ENCODE measurements at regions of chr6 and their contacts with region 1.

Region 1: DNA sequence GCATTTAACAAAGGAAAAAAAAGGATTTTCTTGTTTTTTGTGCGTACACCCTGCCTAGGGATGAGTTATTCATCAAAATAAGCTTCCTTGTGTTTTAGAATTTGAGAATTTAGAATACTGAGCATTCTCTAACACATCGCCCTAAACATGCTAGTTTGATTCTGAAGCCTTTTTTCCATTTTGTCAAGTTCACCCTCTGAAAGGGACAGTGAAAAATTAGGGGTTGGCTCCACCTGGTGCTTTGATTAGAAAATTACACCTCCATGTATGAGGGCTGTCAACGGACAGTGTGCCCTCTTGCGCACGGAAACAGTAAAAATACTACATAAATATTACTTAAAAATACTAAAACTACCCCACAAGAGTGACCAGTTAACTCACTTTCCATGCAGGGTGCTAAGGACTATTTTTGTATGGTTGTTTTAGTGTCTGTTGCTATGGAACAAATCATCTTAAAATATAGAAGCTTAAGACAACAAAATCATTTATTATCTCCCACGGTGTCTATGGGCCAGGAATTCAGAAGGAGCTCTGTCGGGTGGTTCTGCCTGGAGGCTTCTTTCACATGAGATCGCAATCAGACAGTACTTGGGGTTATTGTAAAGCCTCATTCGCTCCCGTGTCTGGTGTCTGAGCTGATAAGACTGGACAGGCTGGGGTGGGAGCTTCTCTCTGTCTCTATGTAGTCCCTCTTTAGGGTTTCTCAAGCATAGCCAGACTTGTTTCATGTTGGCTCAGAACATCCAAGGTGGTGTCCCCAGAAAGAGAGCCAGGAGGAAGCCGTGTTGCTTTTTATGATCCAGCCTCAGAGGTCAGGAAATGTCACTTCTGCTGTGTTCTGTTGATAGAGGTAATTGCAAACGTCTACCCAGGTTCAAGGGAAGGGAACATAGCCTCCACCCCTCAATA is 41.1 kb upstream of the TMEM170B start:
- DNase-seq: peak; percentile 80
- ATAC-seq: peak; percentile 92
- H3K4me3 Mint-ChIP-seq: no peak overlapping the region
- H3K27ac Mint-ChIP-seq: no peak overlapping the region
- H3K4me1 Mint-ChIP-seq: peaks cover 2% of the 10 kb centered on the region
- H3K27me3 Mint-ChIP-seq: no peaks in the 10 kb centered on the region

Region 2: DNA sequence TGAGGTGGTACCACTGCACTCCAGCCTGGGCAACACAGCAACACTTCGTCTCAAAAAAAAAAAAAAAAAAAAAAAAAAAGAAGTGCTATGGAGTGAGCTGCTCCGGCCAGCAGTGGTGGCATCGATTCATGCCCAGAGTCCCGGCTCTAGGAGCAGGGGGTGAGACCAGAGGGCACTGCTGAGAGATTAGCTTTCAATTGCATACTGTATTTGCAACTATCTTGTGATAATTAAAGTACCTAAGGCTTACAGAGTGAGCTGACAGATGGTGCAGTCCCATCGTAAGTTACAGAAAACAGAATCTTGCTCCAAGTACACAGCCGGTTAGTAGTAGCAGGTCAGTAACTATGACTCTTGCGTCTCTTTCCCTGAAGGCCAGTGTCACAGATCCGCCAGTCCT is 717.3 kb before region 1 on chr6:
- CTCF ChIA-PET with region 1: no interaction called
- POLR2A ChIA-PET with region 1: no interaction called
- intact Hi-C with region 1: no loop called
- DNase-seq: no peak
- ATAC-seq: no peak
- H3K4me3 Mint-ChIP-seq: no peak overlapping the region
- H3K27ac Mint-ChIP-seq: no peak overlapping the region
- H3K4me1 Mint-ChIP-seq: no peaks in the 10 kb centered on the region
- H3K27me3 Mint-ChIP-seq: no peaks in the 10 kb centered on the region

Region 3: GRCh38 chr6:11093589-11094410 is 402.6 kb before region 1 on chr6 and contains the start of gene SMIM13:
- CTCF ChIA-PET with region 1: interaction called, 4 read pairs
- POLR2A ChIA-PET with region 1: no interaction called
- intact Hi-C with region 1: loop called (anchors 1 kb)
- DNase-seq: peak; percentile 98
- ATAC-seq: peak; percentile 95
- H3K4me3 Mint-ChIP-seq: peak within 1 kb of the TSS; percentile 96
- H3K27ac Mint-ChIP-seq: peak within 1 kb of the TSS; percentile 99
- H3K4me1 Mint-ChIP-seq: peaks cover 25% of the 10 kb centered on the region
- H3K27me3 Mint-ChIP-seq: no peaks in the 10 kb centered on the region
- total RNA-seq, gene SMIM13: 6.3 to 7.9 TPM

Region 4: GRCh38 chr6:11144393-11144851 is 352.0 kb before region 1 on chr6:
- CTCF ChIA-PET with region 1: interaction called, 59 read pairs
- POLR2A ChIA-PET with region 1: no interaction called
- intact Hi-C with region 1: loop called (anchors 1 kb)
- DNase-seq: peak; percentile 89
- ATAC-seq: peak; percentile 94
- H3K4me3 Mint-ChIP-seq: no peak overlapping the region
- H3K27ac Mint-ChIP-seq: no peak overlapping the region
- H3K4me1 Mint-ChIP-seq: peaks cover 7% of the 10 kb centered on the region
- H3K27me3 Mint-ChIP-seq: no peaks in the 10 kb centered on the region

Region 5: GRCh38 chr6:11198663-11199603 is 297.5 kb before region 1 on chr6:
- CTCF ChIA-PET with region 1: interaction called, 10 read pairs
- POLR2A ChIA-PET with region 1: interaction called, 4 read pairs
- intact Hi-C with region 1: no loop called
- DNase-seq: peak; percentile 47
- ATAC-seq: peak; percentile 81
- H3K4me3 Mint-ChIP-seq: no peak overlapping the region
- H3K27ac Mint-ChIP-seq: peak overlapping the region; percentile 74
- H3K4me1 Mint-ChIP-seq: peaks cover 45% of the 10 kb centered on the region
- H3K27me3 Mint-ChIP-seq: no peaks in the 10 kb centered on the region

Region 6: GRCh38 chr6:11414176-11414963 is 82.0 kb before region 1 on chr6:
- CTCF ChIA-PET with region 1: interaction called, 8 read pairs
- POLR2A ChIA-PET with region 1: no interaction called
- intact Hi-C with region 1: loop called in 1 of 2 experiments (anchors 5 kb)
- DNase-seq: peak; percentile 60
- ATAC-seq: peak; percentile 45
- H3K4me3 Mint-ChIP-seq: no peak overlapping the region
- H3K27ac Mint-ChIP-seq: peak overlapping the region; percentile 42
- H3K4me1 Mint-ChIP-seq: peaks cover 50% of the 10 kb centered on the region
- H3K27me3 Mint-ChIP-seq: no peaks in the 10 kb centered on the region

Region 7: GRCh38 chr6:11514672-11515071 is 18.3 kb after region 1 on chr6:
- CTCF ChIA-PET with region 1: interaction called, 11 read pairs
- POLR2A ChIA-PET with region 1: no interaction called
- intact Hi-C with region 1: no loop called
- DNase-seq: no peak
- ATAC-seq: no peak
- H3K4me3 Mint-ChIP-seq: no peak overlapping the region
- H3K27ac Mint-ChIP-seq: no peak overlapping the region
- H3K4me1 Mint-ChIP-seq: no peaks in the 10 kb centered on the region
- H3K27me3 Mint-ChIP-seq: peaks cover 14% of the 10 kb centered on the region

Region 8: DNA sequence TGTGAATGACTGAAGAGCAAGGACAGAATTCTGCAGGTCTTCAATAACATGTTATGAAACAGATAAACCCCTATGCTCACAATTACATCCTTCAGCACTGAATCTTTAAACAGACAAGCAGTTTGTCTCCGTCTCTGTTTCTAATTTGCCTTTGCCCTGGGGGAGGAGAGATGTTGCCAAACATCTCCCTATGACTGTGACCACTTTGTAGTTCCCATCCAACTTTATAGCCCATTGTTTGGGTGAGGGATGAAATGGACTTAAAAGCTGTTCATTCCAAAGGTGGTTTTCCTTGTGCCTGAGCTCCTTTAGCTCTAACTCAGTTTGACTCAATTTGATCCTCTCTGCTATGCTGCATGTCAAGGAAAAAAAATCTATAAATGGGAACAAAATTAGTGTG is 301.7 kb after region 1 on chr6:
- CTCF ChIA-PET with region 1: no interaction called
- POLR2A ChIA-PET with region 1: no interaction called
- intact Hi-C with region 1: no loop called
- DNase-seq: no peak
- ATAC-seq: no peak
- H3K4me3 Mint-ChIP-seq: no peak overlapping the region
- H3K27ac Mint-ChIP-seq: no peak overlapping the region
- H3K4me1 Mint-ChIP-seq: no peaks in the 10 kb centered on the region
- H3K27me3 Mint-ChIP-seq: no peaks in the 10 kb centered on the region